MCF 10A (cell line): ENCODE measurements at regions of chr6 and their contacts with region 1.

Region 1: GRCh38 chr6:148342357-148343046 is at the start of gene SASH1:
- DNase-seq: peak; percentile 91
- H3K4me3 Mint-ChIP-seq: peak within 1 kb of the TSS; percentile 90
- H3K27ac Mint-ChIP-seq: peak within 1 kb of the TSS; percentile 99
- H3K4me1 Mint-ChIP-seq: peaks cover 34% of the 10 kb centered on the region
- H3K27me3 Mint-ChIP-seq: no peaks in the 10 kb centered on the region
- CTCF ChIP-seq: no peak
- total RNA-seq, gene SASH1: 16.7 and 18.4 TPM in 2 replicates

Region 2: GRCh38 chr6:148263010-148263409 is 79.5 kb before region 1 on chr6:
- CTCF ChIA-PET with region 1: interaction called, 3 read pairs
- POLR2A ChIA-PET with region 1: interaction called, 13 read pairs
- intact Hi-C with region 1: loop called (anchors 1 kb)
- DNase-seq: peak; percentile 77
- H3K4me3 Mint-ChIP-seq: no peak overlapping the region
- H3K27ac Mint-ChIP-seq: no peak overlapping the region
- H3K4me1 Mint-ChIP-seq: peaks cover 24% of the 10 kb centered on the region
- H3K27me3 Mint-ChIP-seq: no peaks in the 10 kb centered on the region
- CTCF ChIP-seq: no peak

Region 3: GRCh38 chr6:148271711-148272439 is 70.6 kb before region 1 on chr6:
- CTCF ChIA-PET with region 1: no interaction called
- POLR2A ChIA-PET with region 1: interaction called, 8 read pairs
- intact Hi-C with region 1: loop called (anchors 1 kb)
- DNase-seq: no peak
- H3K4me3 Mint-ChIP-seq: no peak overlapping the region
- H3K27ac Mint-ChIP-seq: no peak overlapping the region
- H3K4me1 Mint-ChIP-seq: peaks cover 8% of the 10 kb centered on the region
- H3K27me3 Mint-ChIP-seq: no peaks in the 10 kb centered on the region
- CTCF ChIP-seq: no peak

Region 4: GRCh38 chr6:148329596-148330381 is 12.7 kb before region 1 on chr6:
- CTCF ChIA-PET with region 1: interaction called, 5 read pairs
- POLR2A ChIA-PET with region 1: interaction called, 16 read pairs
- intact Hi-C with region 1: no loop called
- DNase-seq: peak; percentile 63
- H3K4me3 Mint-ChIP-seq: no peak overlapping the region
- H3K27ac Mint-ChIP-seq: peak overlapping the region; percentile 16
- H3K4me1 Mint-ChIP-seq: peaks cover 11% of the 10 kb centered on the region
- H3K27me3 Mint-ChIP-seq: no peaks in the 10 kb centered on the region
- CTCF ChIP-seq: no peak

Region 5: GRCh38 chr6:148440877-148441453 is 98.5 kb after region 1 on chr6:
- CTCF ChIA-PET with region 1: no interaction called
- POLR2A ChIA-PET with region 1: interaction called, 23 read pairs
- intact Hi-C with region 1: loop called (anchors 1 kb)
- DNase-seq: peak; percentile 95
- H3K4me3 Mint-ChIP-seq: peak overlapping the region; percentile 44
- H3K27ac Mint-ChIP-seq: peak overlapping the region; percentile 95
- H3K4me1 Mint-ChIP-seq: peaks cover 28% of the 10 kb centered on the region
- H3K27me3 Mint-ChIP-seq: no peaks in the 10 kb centered on the region
- CTCF ChIP-seq: no peak

Region 6: DNA sequence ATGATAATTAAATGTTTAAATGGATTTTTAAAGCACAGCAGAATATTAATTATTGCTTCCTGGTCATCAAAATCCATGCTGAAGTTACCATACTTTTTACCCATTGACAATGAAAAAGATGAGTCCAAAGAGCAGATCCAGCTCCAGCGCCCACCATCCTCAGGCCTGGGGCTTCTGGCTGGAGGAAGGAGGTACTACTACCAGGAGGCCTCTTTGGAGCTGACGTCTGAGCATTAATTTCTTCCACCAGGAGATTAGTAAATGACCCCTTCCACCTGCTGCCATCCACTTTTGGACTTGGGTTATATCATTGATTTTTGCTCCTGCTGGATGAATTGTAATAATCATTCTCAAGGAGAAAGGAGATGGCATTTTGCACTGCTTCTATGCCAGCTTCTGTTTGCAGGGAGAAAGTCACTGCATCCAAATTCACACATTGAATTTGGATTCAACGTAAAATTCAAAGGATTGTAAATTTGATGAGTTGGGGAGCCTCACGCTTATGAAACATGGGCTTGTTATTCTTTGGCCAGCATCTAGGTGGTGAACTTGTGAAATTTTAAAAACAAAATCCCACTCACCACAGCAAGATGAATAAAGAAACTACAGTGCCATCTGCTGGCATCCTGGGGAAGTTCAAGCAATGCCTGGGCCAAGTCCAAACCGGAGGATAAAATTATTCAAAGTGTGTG is 122.0 kb after region 1 on chr6:
- CTCF ChIA-PET with region 1: interaction called, 4 read pairs
- POLR2A ChIA-PET with region 1: interaction called, 4 read pairs
- intact Hi-C with region 1: loop called (anchors 1 kb)
- DNase-seq: peak; percentile 73
- H3K4me3 Mint-ChIP-seq: no peak overlapping the region
- H3K27ac Mint-ChIP-seq: peak overlapping the region; percentile 57
- H3K4me1 Mint-ChIP-seq: peaks cover 27% of the 10 kb centered on the region
- H3K27me3 Mint-ChIP-seq: no peaks in the 10 kb centered on the region
- CTCF ChIP-seq: peak; percentile 96